T-cell (primary cell): ENCODE measurements at regions of chr13 and their contacts with region 1.

Region 1: GRCh38 chr13:102609696-102610095 is 12.9 kb downstream of the TPP2 start:
- DNase-seq: peak in 7 of 35 experiments; percentile 2 to 25 (median 7)
- ATAC-seq: peak; percentile 24 to 70 (median 54)
- H3K4me3 ChIP-seq: no peak overlapping the region
- H3K4me3 Mint-ChIP-seq: no peak overlapping the region
- H3K27ac ChIP-seq: no peak overlapping the region
- H3K27ac Mint-ChIP-seq: peak overlapping the region; percentile 9 to 50
- H3K4me1 ChIP-seq: peaks cover 9 to 10% of the 10 kb centered on the region in 2 experiments
- H3K4me1 Mint-ChIP-seq: peaks cover 58 to 72% (median 63%) of the 10 kb centered on the region in 3 donors
- H3K27me3 ChIP-seq: no peaks in the 10 kb centered on the region
- H3K27me3 Mint-ChIP-seq: no peaks in the 10 kb centered on the region

Region 2: DNA sequence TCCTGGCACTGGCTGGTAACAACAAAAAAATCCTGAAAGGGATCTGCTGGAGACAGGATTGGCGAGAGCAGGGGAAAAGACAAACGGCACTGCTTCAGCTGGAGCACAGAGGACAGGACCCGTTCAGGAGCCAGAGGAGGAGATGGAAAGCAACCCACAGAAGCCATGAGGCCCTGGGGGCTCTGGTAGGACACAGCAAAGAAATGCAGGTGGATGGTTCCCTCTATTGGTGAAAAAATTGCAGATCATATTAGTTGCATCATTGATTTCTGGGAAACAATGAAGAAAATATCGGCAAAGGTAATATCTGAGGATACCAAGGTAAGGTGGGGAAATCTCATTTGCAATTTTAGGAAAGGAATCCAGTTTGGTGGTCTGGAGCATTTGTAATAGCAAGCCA is 38.6 kb before region 1 on chr13:
- CTCF ChIA-PET with region 1: no interaction called
- POLR2A ChIA-PET with region 1: no interaction called
- DNase-seq: no peak
- ATAC-seq: no peak
- H3K4me3 ChIP-seq: no peak overlapping the region
- H3K4me3 Mint-ChIP-seq: no peak overlapping the region
- H3K27ac ChIP-seq: no peak overlapping the region
- H3K27ac Mint-ChIP-seq: no peak overlapping the region
- H3K4me1 ChIP-seq: no peaks in the 10 kb centered on the region
- H3K4me1 Mint-ChIP-seq: no peaks in the 10 kb centered on the region
- H3K27me3 ChIP-seq: peaks cover 3% of the 10 kb centered on the region in 2 experiments
- H3K27me3 Mint-ChIP-seq: peaks cover 17 to 18% of the 10 kb centered on the region in 2 donors

Region 3: DNA sequence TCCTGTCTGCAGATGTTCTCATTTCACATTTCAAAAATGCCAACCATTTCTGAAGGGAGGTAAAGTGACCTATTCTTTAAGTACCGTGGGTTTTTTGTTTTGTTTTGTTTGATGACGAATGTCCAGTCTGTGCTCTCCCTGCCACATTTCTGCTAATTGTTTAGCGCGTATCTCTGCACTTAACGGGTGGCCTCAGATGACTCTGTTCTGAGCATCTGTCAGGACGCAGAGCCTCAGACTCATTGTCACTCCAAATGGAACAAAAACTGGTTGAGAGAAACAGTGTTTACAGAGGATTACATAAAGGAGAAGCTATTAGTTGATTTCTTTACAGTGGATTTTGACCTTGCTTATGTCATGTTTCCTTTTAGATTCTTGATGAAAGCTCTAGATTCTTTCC is 10.8 kb after region 1 on chr13:
- CTCF ChIA-PET with region 1: interaction called in 1 of 2 experiments, 4 read pairs
- POLR2A ChIA-PET with region 1: interaction called in 1 of 2 experiments, 12 read pairs
- DNase-seq: no peak
- ATAC-seq: no peak
- H3K4me3 ChIP-seq: no peak overlapping the region
- H3K4me3 Mint-ChIP-seq: no peak overlapping the region
- H3K27ac ChIP-seq: no peak overlapping the region
- H3K27ac Mint-ChIP-seq: no peak overlapping the region
- H3K4me1 ChIP-seq: no peaks in the 10 kb centered on the region
- H3K4me1 Mint-ChIP-seq: peaks cover 4 to 10% (median 8%) of the 10 kb centered on the region in 3 donors
- H3K27me3 ChIP-seq: no peaks in the 10 kb centered on the region
- H3K27me3 Mint-ChIP-seq: no peaks in the 10 kb centered on the region

Region 4: GRCh38 chr13:104071806-104072205 is 1462.1 kb after region 1 on chr13:
- CTCF ChIA-PET with region 1: no interaction called
- POLR2A ChIA-PET with region 1: no interaction called
- DNase-seq: no peak
- ATAC-seq: no peak
- H3K4me3 ChIP-seq: no peak overlapping the region
- H3K4me3 Mint-ChIP-seq: no peak overlapping the region
- H3K27ac ChIP-seq: no peak overlapping the region
- H3K27ac Mint-ChIP-seq: no peak overlapping the region
- H3K4me1 ChIP-seq: no peaks in the 10 kb centered on the region
- H3K4me1 Mint-ChIP-seq: no peaks in the 10 kb centered on the region
- H3K27me3 ChIP-seq: no peaks in the 10 kb centered on the region
- H3K27me3 Mint-ChIP-seq: no peaks in the 10 kb centered on the region